Transverse colon (tissue), 4 donors: ENCODE measurements at regions of chr12 and their contacts with region 1.

Region 1: DNA sequence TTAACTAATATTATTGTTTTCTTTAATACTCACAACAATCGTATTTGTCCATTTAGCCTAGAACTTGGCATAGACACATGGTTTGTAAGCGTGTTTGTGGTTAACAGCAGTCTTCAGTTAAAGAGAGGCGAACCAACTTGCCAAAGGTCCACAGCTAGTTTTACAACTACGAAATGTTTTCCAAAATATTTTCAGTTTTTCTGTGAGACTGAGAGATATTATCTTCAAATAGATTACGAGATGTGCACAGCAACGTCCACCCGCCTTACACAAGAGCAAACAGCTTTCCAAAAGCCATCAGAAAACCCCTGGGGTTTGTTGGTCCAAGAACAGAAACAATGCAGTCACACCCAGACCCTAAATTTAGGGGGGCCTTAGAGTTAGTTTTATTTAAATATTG is 58.6 kb upstream of the RASSF3 start:
- DNase-seq: no peak
- H3K4me3 ChIP-seq: no peak overlapping the region
- H3K27ac ChIP-seq: no peak overlapping the region
- H3K4me1 ChIP-seq: peaks cover 0 to 6% (median 0%) of the 10 kb centered on the region in 4 donors
- H3K27me3 ChIP-seq: no peaks in the 10 kb centered on the region
- CTCF ChIP-seq: no peak
- EP300 ChIP-seq: no peak
- POLR2A ChIP-seq: no peak

Region 2: GRCh38 chr12:64583771-64584421 is 32.2 kb after region 1 on chr12:
- in situ Hi-C with region 1: no loop called
- intact Hi-C with region 1: loop called (anchors 1 kb)
- DNase-seq: no peak
- H3K4me3 ChIP-seq: peak overlapping the region in 1 of 4 donors; percentile 3
- H3K27ac ChIP-seq: peak overlapping the region in 1 of 4 donors; percentile 16
- H3K4me1 ChIP-seq: peaks cover 0 to 3% (median 0%) of the 10 kb centered on the region in 4 donors
- H3K27me3 ChIP-seq: no peaks in the 10 kb centered on the region
- CTCF ChIP-seq: no peak
- EP300 ChIP-seq: no peak
- POLR2A ChIP-seq: no peak

Region 3: DNA sequence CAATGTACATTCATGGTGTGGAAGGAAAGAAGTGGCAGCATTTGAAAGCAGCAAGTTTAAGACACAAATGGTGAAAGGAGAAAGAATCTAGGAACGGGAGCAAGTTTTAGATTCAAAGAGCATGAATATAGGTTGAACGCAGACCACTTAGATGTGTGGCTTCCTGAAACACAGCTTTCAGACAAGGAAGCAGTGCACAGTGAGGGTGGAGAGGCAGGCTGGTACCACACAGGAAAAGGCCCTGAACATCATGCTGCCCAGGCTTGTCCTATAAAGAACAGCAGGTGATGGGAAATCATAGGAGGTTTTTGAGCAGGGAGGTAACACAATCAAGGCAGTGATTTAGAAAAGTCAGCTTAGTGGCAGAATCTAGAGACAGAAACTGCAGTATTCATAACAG is 171.9 kb after region 1 on chr12:
- in situ Hi-C with region 1: no loop called
- intact Hi-C with region 1: no loop called
- DNase-seq: no peak
- H3K4me3 ChIP-seq: no peak overlapping the region
- H3K27ac ChIP-seq: no peak overlapping the region
- H3K4me1 ChIP-seq: no peaks in the 10 kb centered on the region
- H3K27me3 ChIP-seq: no peaks in the 10 kb centered on the region
- CTCF ChIP-seq: no peak
- EP300 ChIP-seq: no peak
- POLR2A ChIP-seq: no peak